K562 (cell line): ENCODE measurements at regions of chr2 and their contacts with region 1.

Region 1: DNA sequence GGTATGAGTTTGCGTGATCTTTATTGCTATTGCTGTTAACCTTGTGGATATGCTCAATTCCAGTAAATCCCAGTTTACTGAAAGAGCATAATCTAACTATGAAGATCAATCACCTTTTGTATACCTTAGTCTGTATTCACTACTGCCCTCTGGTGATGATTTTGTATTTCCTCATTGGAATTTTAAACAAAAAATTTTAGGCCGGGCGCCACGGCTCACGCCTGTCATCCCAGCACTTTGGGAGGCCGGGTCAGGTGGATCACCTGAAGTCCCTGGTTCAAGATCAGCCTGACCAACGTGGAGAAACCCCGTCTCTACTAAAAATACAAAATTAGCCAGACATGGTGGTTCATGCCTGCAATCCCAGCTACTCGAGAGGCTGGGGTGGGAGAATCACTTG is 5.1 kb downstream of the COMMD1 start:
- DNase-seq: no peak
- ATAC-seq: peak; percentile 36; the same call in 1 of the 3 replicates
- H3K4me3 ChIP-seq: no peak overlapping the region
- H3K27ac ChIP-seq: no peak overlapping the region
- H3K4me1 ChIP-seq: peaks cover 0 to under 1% of the 10 kb centered on the region in 2 experiments; a peak in 1 of 5 replicates
- H3K27me3 ChIP-seq: no peaks in the 10 kb centered on the region
- CTCF ChIP-seq: peak; percentile 8 to 44 (median 40); a peak in 4 of 6 replicates
- EP300 ChIP-seq: no peak
- POLR2A ChIP-seq: no peak
- RAD21 ChIP-seq: peak in 1 of 2 experiments; percentile 32; a peak in 1 of 4 replicates

Region 2: DNA sequence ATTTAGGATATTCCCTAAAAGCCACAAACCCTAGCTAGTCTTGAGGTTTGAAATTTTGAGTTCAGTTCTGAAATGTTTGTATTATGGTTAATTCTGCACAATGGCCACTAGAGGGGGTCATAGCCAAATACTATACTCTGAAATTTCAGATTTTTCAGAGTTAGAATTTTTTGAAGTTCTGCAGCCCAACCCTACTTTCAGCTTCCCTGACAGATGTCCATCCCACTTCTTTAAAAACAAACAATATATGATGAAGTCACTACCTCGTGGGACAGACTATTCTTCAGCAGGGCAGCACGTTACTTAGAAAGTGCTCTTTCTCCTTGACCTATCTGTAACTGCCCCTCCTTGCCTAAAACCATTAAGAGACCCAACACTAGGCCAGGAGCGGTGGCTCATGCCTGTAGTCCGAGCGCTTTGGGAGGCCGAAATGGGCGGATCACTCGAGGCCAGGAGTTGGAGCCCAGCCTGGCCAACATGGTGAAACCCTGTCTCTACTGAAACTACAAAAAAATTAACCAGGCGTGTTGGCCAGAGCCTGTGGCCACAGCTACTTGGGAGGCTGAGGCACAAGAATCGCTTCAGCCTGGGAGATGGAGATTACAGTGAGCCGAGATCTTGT is 1202.7 kb before region 1 on chr2:
- CTCF ChIA-PET with region 1: no interaction called
- POLR2A ChIA-PET with region 1: no interaction called
- in situ Hi-C with region 1: no loop called
- intact Hi-C with region 1: loop called (anchors 5 kb)
- DNase-seq: peak; percentile 39 to 48 (median 43)
- ATAC-seq: peak; percentile 73
- H3K4me3 ChIP-seq: no peak overlapping the region
- H3K27ac ChIP-seq: no peak overlapping the region
- H3K4me1 ChIP-seq: peaks cover 0 to 2% of the 10 kb centered on the region in 2 experiments; a peak in 1 of 5 replicates
- H3K27me3 ChIP-seq: peaks cover 8 to 18% of the 10 kb centered on the region in 2 experiments
- CTCF ChIP-seq: peak; percentile 27 to 79 (median 59); a peak in 5 of 6 replicates
- EP300 ChIP-seq: no peak
- POLR2A ChIP-seq: no peak
- RAD21 ChIP-seq: peak; percentile 58 to 75

Region 3: DNA sequence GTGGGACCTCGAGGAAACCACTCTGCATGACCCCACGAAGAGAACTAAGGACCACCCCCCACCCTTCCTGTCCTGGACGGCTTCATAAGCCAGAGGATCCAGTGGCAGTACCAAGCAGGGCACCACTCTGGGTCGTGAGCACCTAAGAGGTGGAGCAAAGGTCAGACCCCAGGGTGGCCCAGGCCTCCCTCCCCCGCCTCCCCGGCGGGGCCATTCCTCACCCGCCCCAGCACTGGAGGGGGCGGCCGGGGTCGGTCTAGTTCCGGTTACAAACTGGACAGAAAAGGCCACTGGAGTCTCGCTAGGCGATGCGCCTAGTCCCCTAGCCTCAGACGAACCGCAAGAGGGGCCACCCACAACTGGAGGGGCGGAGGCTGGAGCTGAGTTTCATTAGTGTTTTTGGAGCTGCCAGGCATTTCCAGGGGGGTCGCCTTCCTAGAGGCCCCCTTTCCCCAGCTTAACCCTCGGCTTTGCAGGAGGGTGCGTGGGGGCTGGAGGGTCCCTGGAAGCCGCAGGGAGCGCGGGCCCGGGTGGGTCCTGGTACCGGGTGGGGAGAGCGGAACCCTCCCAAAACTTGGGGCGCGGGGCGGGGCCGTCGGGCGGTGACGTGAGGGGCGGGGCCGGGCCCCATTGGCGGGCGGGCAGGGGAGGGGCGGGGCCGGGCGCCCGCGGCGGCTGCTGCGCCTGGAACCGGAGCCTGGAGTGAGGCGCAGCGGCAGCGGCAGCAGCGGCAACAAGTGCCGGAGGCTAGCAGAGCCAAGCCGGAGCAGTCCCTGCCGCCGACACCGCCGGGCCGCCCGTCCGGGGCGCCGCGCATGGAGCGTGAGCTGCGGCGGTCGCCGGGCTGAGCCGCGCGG is 285.0 kb after region 1 on chr2 and contains the start of gene B3GNT2:
- CTCF ChIA-PET with region 1: no interaction called
- POLR2A ChIA-PET with region 1: interaction called, 3 read pairs
- in situ Hi-C with region 1: no loop called
- intact Hi-C with region 1: loop called (anchors 5 kb)
- DNase-seq: peak; percentile 86 to 95 (median 94)
- ATAC-seq: peak; percentile 83
- H3K4me3 ChIP-seq: peak within 1 kb of the TSS; percentile 79
- H3K27ac ChIP-seq: peak within 1 kb of the TSS; percentile 70
- H3K4me1 ChIP-seq: peaks cover 28 to 30% of the 10 kb centered on the region in 2 experiments
- H3K27me3 ChIP-seq: no peaks in the 10 kb centered on the region
- CTCF ChIP-seq: 0 out of 6 replicates have a peak, but pooled peaks of 1 of the 3 experiments have one; percentile 1
- EP300 ChIP-seq: no peak
- POLR2A ChIP-seq: peak; percentile 69
- RAD21 ChIP-seq: no peak
- polyA plus RNA-seq, gene B3GNT2: 6.0 to 8.0 TPM

Region 4: GRCh38 chr2:62774555-62775366 is 864.2 kb after region 1 on chr2:
- CTCF ChIA-PET with region 1: no interaction called
- POLR2A ChIA-PET with region 1: no interaction called
- in situ Hi-C with region 1: no loop called
- intact Hi-C with region 1: loop called (anchors 5 kb)
- DNase-seq: peak; percentile 18 to 63 (median 22)
- ATAC-seq: peak; percentile 96
- H3K4me3 ChIP-seq: no peak overlapping the region
- H3K27ac ChIP-seq: peak overlapping the region; percentile 19; the same call in 1 of the 3 replicates
- H3K4me1 ChIP-seq: peaks cover 0 to 3% of the 10 kb centered on the region in 2 experiments; a peak in 1 of 5 replicates
- H3K27me3 ChIP-seq: no peaks in the 10 kb centered on the region
- CTCF ChIP-seq: peak; percentile 41 to 76 (median 49); a peak in 3 of 6 replicates
- EP300 ChIP-seq: no peak
- POLR2A ChIP-seq: no peak
- RAD21 ChIP-seq: peak; percentile 86 to 93